PC-3 (cell line): ENCODE measurements at regions of chr16 and their contacts with region 1.

Region 1: GRCh38 chr16:3003582-3004302 is 9.0 kb upstream of the CLDN9 start:
- DNase-seq: peak; percentile 97
- ATAC-seq: peak; percentile 96
- H3K4me3 ChIP-seq: peak overlapping the region; percentile 59
- H3K27ac ChIP-seq: no peak overlapping the region
- H3K4me1 ChIP-seq: peaks cover 8% of the 10 kb centered on the region
- H3K27me3 ChIP-seq: no peaks in the 10 kb centered on the region
- CTCF ChIP-seq: peak; percentile 62

Region 2: GRCh38 chr16:2968738-2969544 is 34.8 kb before region 1 on chr16 and contains the start of gene PAQR4:
- CTCF ChIA-PET with region 1: no interaction called
- POLR2A ChIA-PET with region 1: no interaction called
- intact Hi-C with region 1: no loop called
- DNase-seq: peak; percentile 92
- ATAC-seq: peak; percentile 72
- H3K4me3 ChIP-seq: peak within 1 kb of the TSS; percentile 85
- H3K27ac ChIP-seq: peak within 1 kb of the TSS; percentile 43
- H3K4me1 ChIP-seq: peaks cover 22% of the 10 kb centered on the region; the same call in 1 of the 2 replicates
- H3K27me3 ChIP-seq: no peaks in the 10 kb centered on the region
- CTCF ChIP-seq: no peak
- total RNA-seq, gene PAQR4: 37.9 and 45.0 TPM in 2 replicates

Region 3: GRCh38 chr16:2983706-2984136 is 20.0 kb before region 1 on chr16:
- CTCF ChIA-PET with region 1: no interaction called
- POLR2A ChIA-PET with region 1: no interaction called
- intact Hi-C with region 1: no loop called
- DNase-seq: peak; percentile 86
- ATAC-seq: peak; percentile 63
- H3K4me3 ChIP-seq: peak overlapping the region; percentile 55; the same call in 1 of the 2 replicates
- H3K27ac ChIP-seq: no peak overlapping the region
- H3K4me1 ChIP-seq: peaks cover 7% of the 10 kb centered on the region
- H3K27me3 ChIP-seq: no peaks in the 10 kb centered on the region
- CTCF ChIP-seq: peak; percentile 73

Region 4: GRCh38 chr16:3030403-3031212 is 26.9 kb after region 1 on chr16:
- CTCF ChIA-PET with region 1: interaction called, 14 read pairs
- POLR2A ChIA-PET with region 1: no interaction called
- intact Hi-C with region 1: loop called (anchors 2 kb)
- DNase-seq: no peak
- ATAC-seq: no peak
- H3K4me3 ChIP-seq: no peak overlapping the region
- H3K27ac ChIP-seq: peak overlapping the region; percentile 37
- H3K4me1 ChIP-seq: peaks cover 21% of the 10 kb centered on the region
- H3K27me3 ChIP-seq: no peaks in the 10 kb centered on the region
- CTCF ChIP-seq: no peak

Region 5: GRCh38 chr16:3045357-3045728 is 41.6 kb after region 1 on chr16:
- CTCF ChIA-PET with region 1: no interaction called
- POLR2A ChIA-PET with region 1: no interaction called
- intact Hi-C with region 1: no loop called
- DNase-seq: peak; percentile 45
- ATAC-seq: peak; percentile 70
- H3K4me3 ChIP-seq: peak overlapping the region; percentile 74
- H3K27ac ChIP-seq: no peak overlapping the region
- H3K4me1 ChIP-seq: no peaks in the 10 kb centered on the region
- H3K27me3 ChIP-seq: peaks cover 3% of the 10 kb centered on the region; the same call in 1 of the 2 replicates
- CTCF ChIP-seq: no peak

Region 6: DNA sequence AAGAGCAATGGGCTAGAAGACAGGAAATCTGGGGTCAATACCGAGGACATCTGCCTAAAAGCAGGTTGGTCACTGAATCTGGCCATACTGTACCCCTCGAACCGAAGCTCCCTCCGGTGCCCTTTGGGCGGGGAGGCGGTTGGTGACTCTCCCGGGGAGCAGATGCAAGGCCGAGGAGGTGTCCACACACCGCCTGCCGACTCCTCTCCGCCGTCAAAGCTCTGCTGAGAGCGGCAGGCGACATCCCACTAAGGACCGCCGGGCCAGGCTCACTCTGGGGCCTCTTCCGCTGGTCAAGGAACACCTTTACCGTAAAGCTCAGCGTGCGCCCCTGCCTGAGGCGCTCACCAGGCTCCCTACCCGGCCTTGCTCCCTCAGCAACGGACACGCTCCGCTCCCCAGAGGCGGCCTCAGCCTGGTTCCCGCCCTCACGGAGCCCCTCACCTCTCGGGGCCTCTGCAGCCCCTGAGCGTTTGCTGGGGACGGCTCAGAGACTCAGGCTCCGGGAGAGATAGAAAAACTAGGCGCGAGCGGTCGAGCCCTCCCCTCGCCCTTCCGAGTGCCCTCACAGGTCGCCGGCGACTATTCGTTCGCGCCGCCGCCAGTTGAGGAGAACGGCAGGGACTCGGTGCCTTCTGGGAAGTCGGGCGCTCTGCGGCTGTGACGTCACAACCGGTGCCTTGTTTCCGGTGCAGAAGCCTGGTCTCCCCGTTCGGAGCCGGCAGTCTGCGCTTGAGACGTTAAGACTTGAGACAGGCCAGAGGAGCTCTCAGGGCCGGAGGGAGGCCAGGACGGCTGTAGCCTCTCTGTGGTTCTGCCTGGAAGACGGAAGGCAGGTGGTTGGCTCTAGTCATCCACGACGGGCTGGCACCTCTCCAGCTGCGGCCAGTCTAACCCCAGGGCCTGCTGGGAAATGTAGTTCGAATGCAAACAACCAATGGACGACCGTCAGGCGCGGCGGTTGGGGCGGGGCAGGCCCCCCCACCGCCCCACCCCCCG is 231.1 kb after region 1 on chr16 and contains the start of gene ZNF200:
- CTCF ChIA-PET with region 1: no interaction called
- POLR2A ChIA-PET with region 1: no interaction called
- intact Hi-C with region 1: no loop called
- DNase-seq: peak; percentile 90
- ATAC-seq: peak; percentile 98
- H3K4me3 ChIP-seq: peak within 1 kb of the TSS; percentile 90
- H3K27ac ChIP-seq: peak within 1 kb of the TSS; percentile 78
- H3K4me1 ChIP-seq: peaks cover 8% of the 10 kb centered on the region; the same call in 1 of the 2 replicates
- H3K27me3 ChIP-seq: no peaks in the 10 kb centered on the region
- CTCF ChIP-seq: no peak
- total RNA-seq, gene ZNF200: 4.7 and 5.0 TPM in 2 replicates